CD8-positive, alpha-beta T cell (primary cell): ENCODE measurements at regions of chr19 and their contacts with region 1.

Region 1: DNA sequence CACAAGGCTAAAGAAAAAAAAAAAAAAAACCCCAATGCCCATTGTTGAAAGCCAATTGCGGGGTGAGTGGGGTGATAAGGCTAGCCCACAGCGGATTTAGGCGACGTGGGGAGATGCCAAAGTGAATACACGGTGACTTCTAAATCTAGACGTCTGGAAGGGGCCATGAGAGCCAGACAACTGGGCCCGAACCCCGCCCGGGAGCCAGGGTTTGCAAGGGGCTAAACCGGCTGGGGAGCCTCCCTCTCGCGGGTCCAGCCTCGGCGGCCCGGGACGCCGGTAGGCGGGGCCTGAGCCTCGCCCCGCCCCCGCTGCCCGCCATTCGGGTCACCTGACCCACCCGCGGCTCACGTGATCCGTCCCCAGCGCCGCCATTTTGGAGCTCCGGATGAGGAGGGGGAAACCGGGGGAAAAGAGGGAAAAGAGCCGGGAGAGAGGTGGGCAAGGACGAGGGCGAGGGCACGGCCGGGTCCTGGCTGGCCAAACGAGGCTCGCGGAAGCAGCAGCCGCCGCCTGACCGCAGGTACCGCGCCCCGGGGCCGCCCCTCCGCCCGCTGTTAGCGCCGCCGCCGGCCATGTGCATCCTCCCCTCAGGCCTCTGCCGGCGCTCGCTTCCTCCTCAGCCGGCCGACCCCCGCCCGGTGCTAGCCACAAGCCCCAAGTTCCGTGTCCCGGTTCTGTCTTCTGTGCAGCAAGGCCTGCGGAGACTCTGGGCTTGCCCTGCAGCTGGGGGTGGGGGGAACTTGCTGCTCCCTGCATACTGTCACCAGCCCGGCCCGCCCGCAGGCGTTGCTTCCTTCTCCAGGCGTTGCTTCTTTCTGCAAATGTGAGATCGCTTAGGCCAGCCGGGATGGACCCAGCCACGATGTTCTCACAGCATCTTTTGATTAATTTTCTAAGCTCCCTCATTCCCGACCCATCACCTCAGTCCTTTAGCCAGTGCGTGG is at the start of gene ZNF507:
- DNase-seq: peak; percentile 58 to 88 (median 80)
- ATAC-seq: peak; percentile 78
- H3K4me3 ChIP-seq: peak within 1 kb of the TSS; percentile 69 to 91
- H3K4me3 Mint-ChIP-seq: peak within 1 kb of the TSS; percentile 95
- H3K27ac ChIP-seq: peak within 1 kb of the TSS; percentile 68 to 75
- H3K27ac Mint-ChIP-seq: peak within 1 kb of the TSS; percentile 97
- H3K4me1 ChIP-seq: peaks cover 39% of the 10 kb centered on the region
- H3K4me1 Mint-ChIP-seq: peaks cover 42% of the 10 kb centered on the region
- H3K27me3 ChIP-seq: no peaks in the 10 kb centered on the region
- H3K27me3 Mint-ChIP-seq: no peaks in the 10 kb centered on the region
- CTCF ChIP-seq: no peak
- total RNA-seq, gene ZNF507: 28.4 to 29.6 TPM

Region 2: DNA sequence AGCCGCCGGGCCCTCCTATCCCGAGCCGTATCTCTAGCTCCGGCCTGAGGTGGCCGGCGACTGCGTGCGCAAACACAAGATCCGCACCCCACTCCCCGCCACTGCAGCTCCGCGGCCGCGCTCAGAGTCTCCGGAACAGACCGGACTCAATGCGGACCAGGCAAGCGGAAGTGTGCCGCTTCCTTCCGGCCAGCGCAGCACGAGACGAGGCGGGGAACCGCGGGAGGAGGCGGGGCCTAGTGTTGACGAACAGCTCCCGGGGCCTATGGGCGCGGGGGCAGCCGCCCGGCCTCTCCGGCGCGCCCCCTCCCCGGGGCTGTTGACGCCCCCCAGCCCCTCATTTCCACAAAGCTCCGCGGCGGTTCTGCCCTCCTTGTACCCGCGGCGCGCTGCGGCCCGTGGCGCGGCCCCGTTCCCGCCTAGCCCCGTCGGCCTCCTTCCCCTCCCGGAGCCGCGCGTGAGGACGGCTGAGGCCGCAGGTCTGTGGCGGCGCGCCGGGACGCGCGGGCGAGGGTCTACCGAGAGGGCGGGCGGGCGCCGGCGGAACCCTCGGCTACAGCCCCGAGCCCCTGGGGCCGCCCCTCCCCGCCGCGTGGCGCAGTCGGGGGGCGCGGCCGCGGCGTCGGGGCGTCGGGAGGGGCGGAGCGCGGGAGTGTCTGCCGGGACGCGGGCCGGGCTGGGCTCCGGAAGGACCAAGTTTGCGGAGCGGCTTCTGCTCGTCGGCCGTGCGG is 60.1 kb after region 1 on chr19 and contains the start of gene DPY19L3:
- CTCF ChIA-PET with region 1: interaction called, 3 read pairs
- POLR2A ChIA-PET with region 1: interaction called, 9 read pairs
- intact Hi-C with region 1: loop called (anchors 1 kb)
- DNase-seq: peak; percentile 73 to 93 (median 89)
- ATAC-seq: peak; percentile 88
- H3K4me3 ChIP-seq: peak within 1 kb of the TSS; percentile 73 to 79
- H3K4me3 Mint-ChIP-seq: peak within 1 kb of the TSS; percentile 90
- H3K27ac ChIP-seq: peak within 1 kb of the TSS; percentile 87 to 91
- H3K27ac Mint-ChIP-seq: peak within 1 kb of the TSS; percentile 92
- H3K4me1 ChIP-seq: peaks cover 14% of the 10 kb centered on the region
- H3K4me1 Mint-ChIP-seq: peaks cover 22% of the 10 kb centered on the region
- H3K27me3 ChIP-seq: no peaks in the 10 kb centered on the region
- H3K27me3 Mint-ChIP-seq: no peaks in the 10 kb centered on the region
- CTCF ChIP-seq: no peak
- total RNA-seq, gene DPY19L3: 7.9 TPM

Region 3: GRCh38 chr19:32624410-32624809 is 278.9 kb after region 1 on chr19:
- CTCF ChIA-PET with region 1: no interaction called
- POLR2A ChIA-PET with region 1: no interaction called
- intact Hi-C with region 1: no loop called
- DNase-seq: no peak
- ATAC-seq: no peak
- H3K4me3 ChIP-seq: no peak overlapping the region
- H3K4me3 Mint-ChIP-seq: no peak overlapping the region
- H3K27ac ChIP-seq: no peak overlapping the region
- H3K27ac Mint-ChIP-seq: no peak overlapping the region
- H3K4me1 ChIP-seq: no peaks in the 10 kb centered on the region
- H3K4me1 Mint-ChIP-seq: no peaks in the 10 kb centered on the region
- H3K27me3 ChIP-seq: no peaks in the 10 kb centered on the region
- H3K27me3 Mint-ChIP-seq: no peaks in the 10 kb centered on the region
- CTCF ChIP-seq: no peak